ENCODE measurements at regions of chr1 and their contacts with region 1.

Region 1: GRCh38 chr1:92960395-92961130 is 699 bp downstream of the DIPK1A start:
- DNase-seq: peak; percentile 79
- H3K4me3 ChIP-seq: peak overlapping the region; percentile 82 to 83
- H3K27ac ChIP-seq: peak overlapping the region; percentile 66 to 84
- H3K4me1 ChIP-seq: peaks cover 8% of the 10 kb centered on the region in 2 experiments; a peak in 3 of 4 replicates
- H3K27me3 ChIP-seq: no peaks in the 10 kb centered on the region
- CTCF ChIP-seq: peak; percentile 72
- EP300 ChIP-seq: no peak
- RAD21 ChIP-seq: peak; percentile 88

Region 2: GRCh38 chr1:92864131-92864530 is 96.4 kb before region 1 on chr1:
- CTCF ChIA-PET with region 1: interaction called, 163 read pairs
- POLR2A ChIA-PET with region 1: no interaction called
- DNase-seq: no peak
- H3K4me3 ChIP-seq: no peak overlapping the region
- H3K27ac ChIP-seq: no peak overlapping the region
- H3K4me1 ChIP-seq: peaks cover 0 to 1% of the 10 kb centered on the region in 2 experiments; a peak in 1 of 4 replicates
- H3K27me3 ChIP-seq: no peaks in the 10 kb centered on the region
- CTCF ChIP-seq: no peak
- EP300 ChIP-seq: no peak
- RAD21 ChIP-seq: no peak

Region 3: DNA sequence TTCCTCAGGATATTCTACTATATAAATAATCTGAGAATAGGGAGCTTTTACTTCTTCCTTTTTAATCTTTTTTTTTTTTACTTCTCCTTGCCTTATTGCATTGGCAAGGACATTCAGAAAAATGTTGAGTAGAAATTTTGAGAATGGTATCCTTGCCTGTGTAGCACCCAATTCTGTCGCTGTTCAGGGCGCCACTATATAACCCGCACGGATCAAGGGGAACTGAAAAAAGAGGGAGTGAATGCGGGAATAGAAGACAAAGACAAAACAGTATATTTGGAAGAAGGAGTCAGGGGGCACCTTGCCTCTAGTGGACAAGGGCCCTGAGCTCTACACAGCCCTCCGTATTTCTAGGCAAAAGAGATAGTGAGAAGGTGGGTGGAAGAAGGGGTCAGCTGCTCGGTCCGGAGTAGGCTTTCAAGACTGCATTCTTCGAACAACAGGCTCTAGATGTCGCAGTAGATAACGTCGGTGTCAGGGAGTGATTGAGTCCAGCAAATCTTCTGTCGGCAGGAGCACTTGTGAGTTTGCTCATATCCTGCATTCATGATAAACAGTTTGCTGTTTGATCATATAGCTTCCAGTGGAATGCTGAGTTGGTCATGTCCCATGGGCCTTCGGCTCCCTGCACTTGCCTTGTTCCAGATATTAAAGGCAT is 36.2 kb before region 1 on chr1:
- CTCF ChIA-PET with region 1: interaction called, 12 read pairs
- POLR2A ChIA-PET with region 1: no interaction called
- DNase-seq: no peak
- H3K4me3 ChIP-seq: no peak overlapping the region
- H3K27ac ChIP-seq: no peak overlapping the region
- H3K4me1 ChIP-seq: peaks cover 3 to 6% of the 10 kb centered on the region in 2 experiments; a peak in 3 of 4 replicates
- H3K27me3 ChIP-seq: no peaks in the 10 kb centered on the region
- CTCF ChIP-seq: no peak
- EP300 ChIP-seq: no peak
- RAD21 ChIP-seq: no peak

Region 4: DNA sequence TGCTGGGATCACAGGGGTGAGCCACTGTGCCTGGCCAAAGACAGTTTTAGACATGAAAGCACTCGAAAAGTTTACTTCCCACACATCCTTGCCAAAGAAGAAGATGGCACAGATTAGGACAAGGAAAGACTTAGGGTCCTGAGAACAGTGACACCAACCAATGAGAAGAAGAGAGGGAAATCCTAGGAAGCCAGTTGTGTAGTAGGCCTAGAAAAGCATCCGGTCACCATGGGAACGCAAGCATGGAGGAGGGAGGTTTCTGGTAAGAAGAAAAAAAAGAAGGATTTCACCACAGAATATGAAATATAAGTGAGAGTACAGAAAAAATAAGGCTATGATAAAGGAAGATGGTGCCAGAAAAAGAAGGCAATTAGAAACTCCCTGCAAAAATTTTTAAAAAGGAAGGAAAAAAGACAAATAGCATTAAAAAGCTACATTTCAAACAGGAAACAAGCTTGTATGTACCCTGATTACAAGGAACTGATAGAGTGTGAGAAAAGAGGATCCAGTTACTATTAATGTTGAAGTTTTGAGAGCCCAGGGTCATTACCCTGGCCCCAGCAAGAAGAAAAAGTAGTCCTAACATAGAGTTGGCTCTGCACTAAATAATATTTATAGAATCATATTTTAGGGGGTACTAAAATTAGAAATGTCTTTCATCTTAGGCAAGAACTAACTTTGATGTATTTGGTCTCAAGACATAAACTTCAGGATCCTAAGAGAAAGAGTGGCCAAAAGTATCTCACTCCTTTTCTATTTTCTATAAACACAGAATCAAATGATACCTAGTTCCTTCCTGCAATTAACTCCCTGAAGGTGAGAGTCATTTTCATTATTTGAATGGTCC is 15.4 kb before region 1 on chr1:
- CTCF ChIA-PET with region 1: interaction called, 17 read pairs
- POLR2A ChIA-PET with region 1: no interaction called
- DNase-seq: no peak
- H3K4me3 ChIP-seq: no peak overlapping the region
- H3K27ac ChIP-seq: no peak overlapping the region
- H3K4me1 ChIP-seq: peaks cover 4 to 5% of the 10 kb centered on the region in 2 experiments; a peak in 3 of 4 replicates
- H3K27me3 ChIP-seq: no peaks in the 10 kb centered on the region
- CTCF ChIP-seq: no peak
- EP300 ChIP-seq: no peak
- RAD21 ChIP-seq: no peak

Region 5: GRCh38 chr1:92994105-92994712 is 33.6 kb after region 1 on chr1:
- CTCF ChIA-PET with region 1: interaction called, 92 read pairs
- POLR2A ChIA-PET with region 1: no interaction called
- DNase-seq: peak; percentile 59
- H3K4me3 ChIP-seq: no peak overlapping the region; a peak in 1 of 4 replicates
- H3K27ac ChIP-seq: no peak overlapping the region
- H3K4me1 ChIP-seq: no peaks in the 10 kb centered on the region; a peak in 1 of 4 replicates
- H3K27me3 ChIP-seq: no peaks in the 10 kb centered on the region
- CTCF ChIP-seq: peak; percentile 85
- EP300 ChIP-seq: no peak
- RAD21 ChIP-seq: peak; percentile 95

Measured in SK-N-SH (cell line).